Gastrocnemius medialis (tissue), 4 donors: ENCODE measurements at regions of chr12 and their contacts with region 1.

Region 1: DNA sequence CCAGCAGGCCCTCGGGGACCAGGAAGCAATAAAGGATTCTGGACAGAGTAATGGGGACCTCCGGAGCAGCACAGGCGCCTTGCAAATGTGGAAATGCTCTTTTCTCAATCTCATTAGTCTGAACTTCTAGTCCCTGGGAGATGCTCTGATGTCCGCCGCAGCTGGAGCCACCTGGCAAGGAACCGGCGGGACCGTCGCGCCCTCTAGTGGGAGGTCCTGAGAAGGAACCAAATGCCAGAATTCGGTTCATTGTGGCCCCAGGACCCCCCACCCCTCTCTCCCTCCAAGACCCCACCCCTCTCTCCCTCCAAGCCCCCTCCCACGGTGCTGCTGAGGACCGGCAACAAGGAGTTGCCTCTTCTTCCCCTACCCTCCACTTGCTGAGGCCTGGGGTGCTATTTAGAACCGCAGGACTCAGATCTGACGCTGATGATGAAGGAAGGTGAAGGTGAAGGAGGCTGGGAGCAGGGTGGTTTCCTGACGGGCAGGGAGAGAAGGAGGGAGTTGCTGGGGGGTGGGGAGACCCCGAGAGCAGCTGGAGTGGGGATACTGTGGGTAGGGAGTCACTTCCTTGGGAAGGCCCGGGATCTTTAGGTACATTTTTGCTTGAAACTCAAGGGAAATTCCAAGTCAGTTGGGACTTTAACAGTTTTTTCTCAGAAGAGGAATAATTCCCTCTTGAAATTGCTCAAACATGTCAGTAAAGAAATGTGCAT is 42.5 kb downstream of the SMIM41 start:
- DNase-seq: peak; percentile 33 to 42
- ATAC-seq: peak; percentile 18 to 42
- H3K4me3 ChIP-seq: no peak overlapping the region
- H3K27ac ChIP-seq: no peak overlapping the region
- H3K4me1 ChIP-seq: peaks cover 0 to 18% of the 10 kb centered on the region in 2 donors
- H3K27me3 ChIP-seq: no peaks in the 10 kb centered on the region
- CTCF ChIP-seq: peak; percentile 32 to 81 (median 60)
- POLR2A ChIP-seq: no peak

Region 2: DNA sequence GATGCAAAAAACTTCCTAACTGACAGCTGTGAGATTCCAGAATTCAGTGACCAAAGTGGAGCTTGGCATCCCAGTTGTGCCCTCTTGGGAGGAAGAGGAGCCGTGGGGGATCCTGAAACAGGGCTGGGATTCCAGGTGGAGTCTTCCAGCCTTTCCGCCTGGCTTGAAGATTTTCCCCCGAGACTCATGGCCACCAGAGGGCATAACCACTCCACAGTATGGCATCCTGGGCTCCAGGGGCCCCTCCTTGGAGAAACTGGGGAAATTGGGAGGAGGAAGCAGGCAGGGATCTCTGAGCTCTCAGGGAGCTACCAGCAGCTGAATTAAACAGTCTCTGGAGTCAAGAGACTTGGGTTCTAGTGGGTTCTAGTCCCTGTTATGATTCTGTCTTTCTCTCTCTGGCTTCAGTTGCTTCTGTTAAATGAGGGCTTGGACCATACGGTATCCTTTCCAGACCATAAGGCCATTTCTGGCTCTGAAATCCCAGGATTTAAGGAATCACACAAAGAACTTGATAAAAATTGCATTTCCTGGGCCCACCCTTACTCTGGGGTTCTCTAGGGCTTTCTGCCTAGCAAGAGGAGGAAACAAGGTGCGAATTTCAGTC is 117.8 kb before region 1 on chr12:
- in situ Hi-C with region 1: no loop called
- intact Hi-C with region 1: loop called (anchors 5 kb)
- DNase-seq: peak in 1 of 2 donors; percentile 39
- ATAC-seq: peak in 1 of 2 donors; percentile 40
- H3K4me3 ChIP-seq: no peak overlapping the region
- H3K27ac ChIP-seq: no peak overlapping the region
- H3K4me1 ChIP-seq: peaks cover 0 to 4% of the 10 kb centered on the region in 2 donors
- H3K27me3 ChIP-seq: peaks cover 2 to 19% (median 19%) of the 10 kb centered on the region in 3 donors
- CTCF ChIP-seq: peak; percentile 47 to 77 (median 72)
- POLR2A ChIP-seq: no peak

Region 3: GRCh38 chr12:52087961-52088820 is 33.8 kb before region 1 on chr12:
- in situ Hi-C with region 1: no loop called
- intact Hi-C with region 1: loop called (anchors 5 kb)
- DNase-seq: peak in 1 of 2 donors; percentile 73
- ATAC-seq: peak; percentile 26 to 50
- H3K4me3 ChIP-seq: no peak overlapping the region
- H3K27ac ChIP-seq: peak overlapping the region; percentile 74 to 84 (median 81)
- H3K4me1 ChIP-seq: peaks cover 33 to 42% of the 10 kb centered on the region in 2 donors
- H3K27me3 ChIP-seq: peaks cover 0 to 4% (median 0%) of the 10 kb centered on the region in 3 donors
- CTCF ChIP-seq: no peak
- POLR2A ChIP-seq: no peak